ENCODE measurements at regions of chr16 and their contacts with region 1.

Region 1: GRCh38 chr16:66824006-66824405 is 6.8 kb downstream of the NAE1 start:
- DNase-seq: no peak
- H3K4me3 Mint-ChIP-seq: no peak overlapping the region
- H3K27ac Mint-ChIP-seq: no peak overlapping the region
- H3K4me1 Mint-ChIP-seq: no peaks in the 10 kb centered on the region
- H3K27me3 Mint-ChIP-seq: no peaks in the 10 kb centered on the region
- CTCF ChIP-seq: no peak

Region 2: DNA sequence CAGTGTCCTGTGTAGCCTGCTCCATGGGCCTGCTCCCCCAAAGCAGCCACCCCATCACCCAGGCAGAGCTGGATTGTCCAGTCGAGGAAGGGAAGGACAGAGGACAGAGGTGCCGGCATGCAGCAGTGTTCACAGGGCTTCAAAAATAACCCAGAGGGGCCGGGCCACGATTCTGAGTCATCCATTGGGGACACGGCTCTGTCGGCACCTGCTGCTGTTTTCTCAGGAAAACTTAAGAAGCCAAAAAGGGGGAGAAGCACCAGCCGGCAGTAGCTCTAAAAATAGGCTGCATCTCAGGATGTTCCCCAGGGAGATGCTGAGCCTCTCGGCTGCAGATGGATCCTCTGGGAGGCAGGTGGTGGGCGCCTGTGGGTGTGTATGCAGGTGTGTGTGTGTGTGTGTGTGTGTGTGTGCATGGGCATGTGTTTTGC is 21.8 kb after region 1 on chr16:
- CTCF ChIA-PET with region 1: interaction called, 10 read pairs
- intact Hi-C with region 1: no loop called
- DNase-seq: no peak
- H3K4me3 Mint-ChIP-seq: no peak overlapping the region
- H3K27ac Mint-ChIP-seq: no peak overlapping the region
- H3K4me1 Mint-ChIP-seq: peaks cover 8% of the 10 kb centered on the region
- H3K27me3 Mint-ChIP-seq: peaks cover 76% of the 10 kb centered on the region
- CTCF ChIP-seq: no peak

Region 3: DNA sequence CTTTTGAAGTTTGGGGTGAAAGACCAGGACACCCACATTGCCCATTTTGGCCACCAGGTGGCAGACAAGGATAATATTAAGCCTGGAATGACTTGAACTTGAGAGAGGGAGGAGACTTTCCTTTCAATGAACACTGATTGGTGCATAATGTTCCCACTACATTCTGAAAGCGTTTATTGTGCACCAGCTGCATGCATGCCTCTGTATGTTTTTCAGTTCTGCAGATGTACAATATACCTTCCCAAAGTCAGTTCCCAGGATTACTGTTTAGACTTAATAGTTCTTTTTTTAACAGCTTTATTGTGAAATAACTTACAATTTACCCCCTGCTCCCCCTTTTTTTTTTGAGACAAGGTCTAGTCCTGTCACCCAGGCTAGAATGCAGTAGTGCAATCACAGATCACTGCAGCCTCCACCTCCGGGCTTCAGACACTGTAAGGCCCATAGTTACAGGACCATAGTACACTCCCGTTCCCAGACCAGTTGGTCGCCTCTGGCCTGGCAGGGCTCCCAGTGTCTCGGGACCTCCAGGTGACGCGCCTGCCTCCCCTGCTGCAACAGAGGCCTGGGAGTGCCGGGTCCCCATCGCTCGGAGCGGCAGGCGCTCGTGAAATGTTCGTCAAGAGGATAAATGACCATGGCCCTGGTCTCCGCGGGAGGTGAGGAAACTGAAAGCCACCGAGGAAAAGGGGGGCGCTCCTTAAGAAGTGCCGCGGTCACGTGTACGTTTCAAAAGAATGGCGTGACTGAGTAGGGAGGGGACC is 123.5 kb after region 1 on chr16:
- CTCF ChIA-PET with region 1: no interaction called
- intact Hi-C with region 1: no loop called
- DNase-seq: peak; percentile 86
- H3K4me3 Mint-ChIP-seq: peak overlapping the region; percentile 77
- H3K27ac Mint-ChIP-seq: peak overlapping the region; percentile 32
- H3K4me1 Mint-ChIP-seq: peaks cover 20% of the 10 kb centered on the region
- H3K27me3 Mint-ChIP-seq: peaks cover 29% of the 10 kb centered on the region
- CTCF ChIP-seq: peak; percentile 89

Measured in Calu3 (cell line).